Posterior vena cava (tissue), 2 donors: ENCODE measurements at regions of chr12 and their contacts with region 1.

Region 1: DNA sequence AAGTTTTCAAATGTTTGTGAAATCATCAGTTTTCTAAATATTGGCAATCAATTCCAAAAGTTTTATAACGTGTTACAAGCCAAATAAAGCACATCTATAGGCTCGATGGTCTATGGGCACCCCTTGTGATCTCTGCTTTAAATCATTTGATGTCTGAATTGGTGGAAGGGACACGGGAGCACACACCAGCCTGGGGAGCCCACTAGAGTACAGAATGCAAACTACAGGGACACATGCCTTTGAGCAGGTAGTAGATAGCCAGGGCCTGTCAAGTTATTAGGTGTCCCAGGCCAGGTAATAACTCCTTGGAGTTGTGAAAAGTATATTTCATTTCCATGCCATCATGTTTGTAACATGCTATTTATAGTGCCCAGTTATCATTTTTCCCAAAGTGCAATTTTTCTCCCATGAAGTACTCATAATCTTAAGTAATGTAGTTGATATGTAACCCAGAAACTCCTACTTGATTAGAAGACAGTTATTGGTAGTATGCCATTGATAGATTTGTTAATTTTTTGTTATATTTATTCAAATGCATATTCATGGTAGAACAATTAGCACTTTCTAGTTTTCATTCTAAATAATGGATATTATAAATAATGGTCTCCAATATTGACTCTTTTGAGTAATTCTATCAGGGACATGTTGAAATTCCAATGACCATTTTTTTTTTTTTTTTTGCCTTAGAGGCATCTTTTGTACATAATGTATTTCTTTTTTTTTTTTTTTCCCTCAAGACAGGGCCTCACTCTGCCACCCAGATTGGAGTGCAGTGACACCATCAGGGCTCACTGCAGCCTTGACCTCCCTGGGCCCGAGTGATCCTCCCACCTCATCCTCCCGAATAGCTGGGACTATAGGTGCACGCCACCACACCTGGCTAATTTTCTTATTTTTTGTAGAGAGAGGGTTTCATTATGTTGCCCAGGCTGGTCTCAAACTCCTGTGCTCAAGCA is 96.9 kb upstream of the FGD4 start:
- DNase-seq: no peak

Region 2: GRCh38 chr12:31659087-31659933 is 643.2 kb before region 1 on chr12 and contains the start of gene ETFBKMT:
- intact Hi-C with region 1: loop called in 1 of 2 experiments (anchors 10 kb)
- DNase-seq: peak; percentile 95
- total RNA-seq, gene ETFBKMT: 2.9 to 3.2 TPM

Region 3: GRCh38 chr12:32062881-32063280 is 239.6 kb before region 1 on chr12:
- intact Hi-C with region 1: loop called (anchors 5 to 10 kb)
- DNase-seq: no peak

Region 4: DNA sequence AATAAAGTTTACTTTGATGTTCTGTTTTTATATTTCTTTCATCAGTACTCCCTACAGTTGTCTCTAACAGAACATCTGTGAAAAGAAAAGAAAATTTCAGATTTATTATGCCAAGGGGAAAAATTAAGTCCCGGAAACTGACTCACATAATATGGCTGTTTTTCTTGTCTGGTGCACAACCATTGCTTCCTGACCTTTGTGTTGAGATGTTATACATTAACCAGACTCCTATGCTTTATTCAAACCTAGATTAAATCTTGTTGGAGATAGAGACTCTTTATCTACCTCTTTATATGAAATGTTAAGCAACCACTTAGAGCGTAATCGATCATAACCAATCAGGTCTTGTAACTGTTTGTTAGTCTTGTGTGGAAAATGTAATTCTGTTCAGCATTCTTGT is 233.4 kb before region 1 on chr12:
- intact Hi-C with region 1: loop called (anchors 5 to 10 kb)
- DNase-seq: no peak

Region 5: DNA sequence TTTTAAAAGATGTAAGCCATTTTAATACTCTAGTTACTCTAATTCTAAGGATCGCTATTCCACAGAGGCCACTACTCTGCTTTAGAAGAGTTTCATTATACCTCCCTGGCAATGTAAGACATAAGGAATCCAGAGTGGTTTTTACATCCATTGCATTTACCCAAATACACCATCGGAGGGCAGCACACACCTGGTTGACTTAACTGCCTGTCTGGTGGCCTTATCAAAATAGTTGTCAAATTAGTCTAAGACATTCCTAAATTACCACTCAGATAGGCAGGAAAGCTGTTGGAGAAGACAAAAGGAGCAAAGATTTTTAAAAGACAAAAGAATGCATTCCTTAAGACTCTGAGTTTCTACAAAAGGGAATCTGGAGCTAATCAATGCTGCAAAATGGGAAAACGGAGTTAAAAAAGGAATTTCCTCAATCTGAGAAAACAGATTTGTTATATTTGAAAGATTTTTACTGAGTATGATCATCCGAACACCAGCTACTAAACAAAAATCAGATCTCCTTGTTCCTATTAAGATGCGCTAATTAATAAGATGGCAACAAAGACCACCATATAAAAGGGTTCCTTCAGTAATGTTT is 63.1 kb after region 1 on chr12:
- intact Hi-C with region 1: no loop called
- DNase-seq: no peak